A673 (cell line): ENCODE measurements at regions of chr6 and their contacts with region 1.

Region 1: GRCh38 chr6:68778356-68779020 is 143.4 kb downstream of the ADGRB3 start:
- DNase-seq: peak; percentile 87
- H3K4me3 ChIP-seq: no peak overlapping the region
- H3K27ac ChIP-seq: no peak overlapping the region
- H3K4me1 ChIP-seq: peaks cover 41% of the 10 kb centered on the region
- H3K27me3 ChIP-seq: no peaks in the 10 kb centered on the region
- CTCF ChIP-seq: peak; percentile 90

Region 2: GRCh38 chr6:67210390-67210789 is 1568.1 kb before region 1 on chr6:
- CTCF ChIA-PET with region 1: no interaction called
- POLR2A ChIA-PET with region 1: no interaction called
- intact Hi-C with region 1: no loop called
- DNase-seq: peak; percentile 59
- H3K4me3 ChIP-seq: no peak overlapping the region
- H3K27ac ChIP-seq: no peak overlapping the region
- H3K4me1 ChIP-seq: no peaks in the 10 kb centered on the region
- H3K27me3 ChIP-seq: no peaks in the 10 kb centered on the region
- CTCF ChIP-seq: no peak

Region 3: DNA sequence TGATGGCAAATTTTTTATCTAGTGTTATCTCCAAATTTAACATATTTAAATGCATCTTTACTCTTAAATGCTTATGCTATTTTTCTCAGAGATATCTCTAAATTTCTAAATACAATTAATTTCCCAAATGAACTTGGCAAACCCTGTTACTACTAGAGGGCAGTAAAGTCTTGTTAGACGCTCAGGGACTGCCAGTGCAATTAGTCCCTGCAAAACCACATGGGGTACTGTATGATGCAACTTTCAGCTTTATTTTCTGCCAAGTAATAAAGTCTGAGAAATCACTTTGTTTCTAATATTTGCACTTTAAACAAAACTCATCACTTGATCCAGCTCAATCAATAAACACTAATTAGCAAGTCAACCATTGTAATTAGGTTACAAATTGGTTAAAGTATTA is 219.4 kb before region 1 on chr6:
- CTCF ChIA-PET with region 1: no interaction called
- POLR2A ChIA-PET with region 1: no interaction called
- intact Hi-C with region 1: loop called (anchors 2 kb)
- DNase-seq: peak; percentile 79
- H3K4me3 ChIP-seq: peak overlapping the region; percentile 38
- H3K27ac ChIP-seq: peak overlapping the region; percentile 87
- H3K4me1 ChIP-seq: peaks cover 23% of the 10 kb centered on the region
- H3K27me3 ChIP-seq: no peaks in the 10 kb centered on the region
- CTCF ChIP-seq: peak; percentile 69; the same call in 1 of the 2 replicates

Region 4: GRCh38 chr6:68572525-68572924 is 206.0 kb before region 1 on chr6:
- CTCF ChIA-PET with region 1: no interaction called
- POLR2A ChIA-PET with region 1: no interaction called
- intact Hi-C with region 1: loop called (anchors 2 kb)
- DNase-seq: peak; percentile 87
- H3K4me3 ChIP-seq: no peak overlapping the region
- H3K27ac ChIP-seq: no peak overlapping the region
- H3K4me1 ChIP-seq: no peaks in the 10 kb centered on the region
- H3K27me3 ChIP-seq: no peaks in the 10 kb centered on the region
- CTCF ChIP-seq: peak; percentile 72